ENCODE measurements at regions of chr6 and their contacts with region 1.

Region 1: GRCh38 chr6:73665686-73666319 is 12.0 kb upstream of the SLC17A5 start:
- DNase-seq: no peak
- H3K4me3 Mint-ChIP-seq: no peak overlapping the region
- H3K27ac Mint-ChIP-seq: peak overlapping the region; percentile 18
- H3K4me1 Mint-ChIP-seq: peaks cover 35% of the 10 kb centered on the region
- H3K27me3 Mint-ChIP-seq: peaks cover 10% of the 10 kb centered on the region

Region 2: DNA sequence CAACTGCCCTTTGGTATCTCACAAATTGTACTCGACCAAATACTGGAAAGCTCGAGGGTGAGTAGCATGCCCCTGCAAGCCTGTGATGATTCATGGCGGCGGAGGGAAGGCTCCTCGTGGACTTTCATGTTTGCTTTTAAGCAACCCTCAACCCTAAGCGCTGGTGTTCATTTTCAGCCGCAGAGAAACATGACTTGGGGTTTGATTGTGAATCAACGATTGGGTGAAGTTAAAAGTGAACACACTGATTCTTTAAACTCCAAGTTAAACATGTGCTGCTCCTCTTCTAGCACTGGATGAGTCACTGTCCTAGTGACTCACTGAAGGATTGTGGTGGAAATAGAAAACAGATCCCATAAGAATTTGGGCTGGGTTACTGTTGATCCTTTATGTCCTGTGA is 38.5 kb after region 1 on chr6:
- intact Hi-C with region 1: loop called (anchors 5 kb)
- DNase-seq: no peak
- H3K4me3 Mint-ChIP-seq: no peak overlapping the region
- H3K27ac Mint-ChIP-seq: peak overlapping the region; percentile 78
- H3K4me1 Mint-ChIP-seq: peaks cover 37% of the 10 kb centered on the region
- H3K27me3 Mint-ChIP-seq: no peaks in the 10 kb centered on the region

Region 3: DNA sequence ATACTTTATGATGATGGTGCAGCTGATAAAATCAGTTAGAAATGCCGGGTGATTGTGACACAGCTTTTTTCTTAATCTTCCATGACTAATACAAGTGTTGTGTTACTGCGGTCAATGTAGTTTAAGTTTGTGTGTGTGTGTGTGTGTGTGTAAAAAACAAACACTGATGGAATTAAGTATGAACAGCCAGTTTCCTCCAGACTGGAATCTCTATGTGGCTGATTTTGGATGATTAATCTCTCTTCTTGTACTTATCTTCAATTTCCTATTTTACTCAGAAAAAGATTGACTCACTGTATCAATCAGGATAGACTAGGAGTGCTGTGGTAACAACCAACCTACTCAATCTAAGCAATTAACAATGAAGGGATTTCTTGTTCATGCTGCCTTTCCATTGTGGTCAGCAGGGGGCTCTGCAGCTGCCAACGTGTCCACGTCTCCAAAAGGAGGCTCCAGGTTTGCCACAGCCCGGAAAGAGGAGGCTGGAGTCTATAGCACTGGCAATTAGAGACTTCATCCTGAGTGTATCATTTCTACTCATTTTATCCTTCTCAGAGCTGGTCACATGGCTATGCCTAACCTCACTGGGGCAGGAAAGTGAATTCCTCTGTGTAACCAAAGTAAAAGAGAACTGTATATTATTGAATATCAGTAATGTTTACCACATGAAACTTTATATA is 137.9 kb after region 1 on chr6:
- intact Hi-C with region 1: loop called (anchors 5 kb)
- DNase-seq: no peak
- H3K4me3 Mint-ChIP-seq: no peak overlapping the region
- H3K27ac Mint-ChIP-seq: peak overlapping the region; percentile 67
- H3K4me1 Mint-ChIP-seq: peaks cover 26% of the 10 kb centered on the region
- H3K27me3 Mint-ChIP-seq: no peaks in the 10 kb centered on the region

Measured in activated T-helper 2 cell treated with anti-CD3 and anti-CD28 coated beads, Interferon-gamma antibody, Interleukin-2, Interleukin-4, amounts not matched to agents 10 μg/mL and 5 μg/mL and 100 μg/mL, durations not matched to agents 14 hours and 24 hours and 36 hours (primary cell).